Ascending aorta (tissue), 2 donors: ENCODE measurements at regions of chr1 and their contacts with region 1.

Region 1: GRCh38 chr1:115062542-115063011 is 26.7 kb downstream of the TSPAN2 start:
- DNase-seq: peak; percentile 36 to 77
- H3K4me3 ChIP-seq: no peak overlapping the region
- H3K27ac ChIP-seq: peak overlapping the region; percentile 86 to 87
- H3K4me1 ChIP-seq: peaks cover 14 to 28% of the 10 kb centered on the region in 2 donors
- H3K27me3 ChIP-seq: no peaks in the 10 kb centered on the region
- CTCF ChIP-seq: no peak

Region 2: DNA sequence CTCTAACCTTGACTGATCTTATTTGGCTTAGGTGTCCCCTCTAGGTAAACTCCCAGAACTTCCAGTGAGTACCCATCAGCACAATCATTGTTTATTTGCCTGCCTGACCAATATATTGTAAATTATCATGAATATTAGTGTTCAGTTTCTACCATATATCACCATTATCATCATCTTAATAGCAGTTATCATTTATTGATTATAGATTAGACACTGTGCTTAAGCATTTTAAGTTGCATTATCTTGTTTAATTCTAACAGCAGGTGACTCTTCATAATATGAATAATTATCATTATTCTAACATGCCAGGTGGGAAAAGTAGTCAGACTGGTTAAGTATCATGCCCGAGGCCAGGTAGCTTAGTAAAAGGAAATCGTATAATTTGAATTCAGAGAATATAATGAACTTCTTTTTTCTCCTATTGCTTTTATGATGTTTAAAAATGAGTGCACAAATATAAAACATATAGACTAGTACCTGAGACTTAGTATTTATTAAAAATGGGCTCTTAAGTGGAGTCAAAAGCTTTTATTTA is 178.1 kb before region 1 on chr1:
- intact Hi-C with region 1: no loop called
- DNase-seq: no peak
- H3K4me3 ChIP-seq: no peak overlapping the region
- H3K27ac ChIP-seq: no peak overlapping the region
- H3K4me1 ChIP-seq: no peaks in the 10 kb centered on the region
- H3K27me3 ChIP-seq: no peaks in the 10 kb centered on the region
- CTCF ChIP-seq: no peak

Region 3: DNA sequence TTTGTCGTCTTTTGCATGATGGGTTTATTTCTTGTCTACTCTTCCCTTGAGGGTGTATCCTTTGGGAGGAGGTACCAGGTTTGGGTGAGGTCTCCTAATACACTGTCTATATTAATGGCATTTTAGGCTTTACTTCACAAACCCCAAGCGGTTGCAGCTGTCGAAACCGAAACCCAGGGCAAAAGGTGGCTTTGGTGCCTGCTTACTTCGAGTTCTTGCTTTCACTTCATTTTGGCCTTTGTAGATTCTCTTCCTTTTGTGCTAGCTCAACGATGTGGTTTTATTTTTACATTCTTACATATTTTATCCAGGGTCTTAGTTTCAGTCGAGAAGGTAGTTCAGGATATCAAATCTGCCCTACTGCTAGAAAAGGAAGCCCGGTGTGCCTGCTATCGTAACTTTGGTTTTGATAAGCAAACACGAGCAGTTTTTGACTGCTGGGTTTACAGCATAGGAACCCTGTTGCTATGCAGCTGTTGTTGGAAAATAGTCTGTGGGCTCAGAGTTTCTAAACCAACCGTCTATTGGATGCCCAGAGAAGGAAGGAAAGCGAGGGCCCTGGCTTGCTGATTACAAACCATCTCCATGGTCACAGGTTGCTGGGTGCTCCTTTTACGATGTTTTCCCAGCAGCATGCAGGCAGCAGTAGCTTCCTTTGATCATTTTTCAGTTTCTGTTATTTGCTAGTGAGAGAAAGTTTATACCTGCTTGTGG is 36.6 kb after region 1 on chr1:
- intact Hi-C with region 1: loop called (anchors 5 kb)
- DNase-seq: peak in 1 of 2 donors; percentile 81
- H3K4me3 ChIP-seq: peak overlapping the region; percentile 32 to 61
- H3K27ac ChIP-seq: peak overlapping the region; percentile 82
- H3K4me1 ChIP-seq: peaks cover 0 to 3% of the 10 kb centered on the region in 2 donors
- H3K27me3 ChIP-seq: no peaks in the 10 kb centered on the region
- CTCF ChIP-seq: no peak